ENCODE measurements at regions of chr19 and their contacts with region 1.

Region 1: GRCh38 chr19:45478454-45479238 is 10.8 kb downstream of the FOSB start:
- DNase-seq: peak; percentile 96
- ATAC-seq: peak; percentile 86
- H3K4me3 Mint-ChIP-seq: peak overlapping the region; percentile 58
- H3K27ac Mint-ChIP-seq: peak overlapping the region; percentile 95
- H3K4me1 Mint-ChIP-seq: peaks cover 18% of the 10 kb centered on the region
- H3K27me3 Mint-ChIP-seq: peaks cover 1% of the 10 kb centered on the region
- CTCF ChIP-seq: peak; percentile 71

Region 2: DNA sequence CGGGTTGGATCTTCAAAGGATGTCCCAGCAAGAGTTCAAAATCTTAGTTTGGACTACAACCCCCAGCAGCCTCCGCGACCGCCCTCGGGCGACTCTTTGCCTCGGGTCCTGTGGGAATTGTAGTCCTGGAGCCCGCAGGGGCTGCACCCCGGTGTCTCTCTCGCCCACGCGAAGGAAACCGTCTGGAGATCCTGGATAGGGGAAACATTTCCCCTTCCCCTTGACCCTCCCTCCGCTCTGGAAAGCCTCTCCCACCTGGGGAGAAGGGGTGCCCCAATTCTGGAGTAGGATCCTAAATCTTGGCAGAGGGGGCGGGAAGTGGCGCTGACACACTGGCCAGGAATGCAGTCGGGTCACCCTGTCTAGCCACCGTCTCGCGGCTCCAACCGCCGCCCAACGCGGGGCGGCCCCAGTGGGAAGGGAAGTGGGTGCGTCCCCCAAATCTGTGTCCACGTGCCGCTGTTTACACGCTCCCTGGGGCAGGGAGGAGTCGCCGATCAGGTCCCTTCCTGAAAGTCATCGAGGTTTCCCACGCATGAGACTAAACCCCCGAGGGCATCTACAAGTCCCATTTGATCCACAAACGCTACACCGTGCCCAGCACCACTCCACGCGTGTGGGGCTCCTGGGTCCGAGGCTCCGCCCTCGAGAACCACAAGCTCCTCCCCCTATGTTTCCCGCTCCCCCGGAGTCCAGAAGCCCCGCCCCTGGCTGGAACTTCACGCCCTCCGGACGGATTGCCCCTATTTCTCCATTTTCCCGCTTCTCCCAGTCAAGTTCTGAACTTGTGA is 73.0 kb before region 1 on chr19:
- CTCF ChIA-PET with region 1: interaction called, 32 read pairs
- POLR2A ChIA-PET with region 1: interaction called, 4 read pairs
- intact Hi-C with region 1: no loop called
- DNase-seq: peak; percentile 92
- ATAC-seq: peak; percentile 59
- H3K4me3 Mint-ChIP-seq: peak overlapping the region; percentile 93
- H3K27ac Mint-ChIP-seq: peak overlapping the region; percentile 88
- H3K4me1 Mint-ChIP-seq: peaks cover 36% of the 10 kb centered on the region
- H3K27me3 Mint-ChIP-seq: peaks cover 26% of the 10 kb centered on the region
- CTCF ChIP-seq: no peak

Region 3: GRCh38 chr19:45423589-45424190 is 55.0 kb before region 1 on chr19 and contains the start of gene ERCC1:
- CTCF ChIA-PET with region 1: interaction called, 22 read pairs
- POLR2A ChIA-PET with region 1: interaction called, 4 read pairs
- intact Hi-C with region 1: loop called (anchors 10 kb)
- DNase-seq: peak; percentile 89
- ATAC-seq: peak; percentile 74
- H3K4me3 Mint-ChIP-seq: peak within 1 kb of the TSS; percentile 89
- H3K27ac Mint-ChIP-seq: peak within 1 kb of the TSS; percentile 89
- H3K4me1 Mint-ChIP-seq: peaks cover 58% of the 10 kb centered on the region
- H3K27me3 Mint-ChIP-seq: no peaks in the 10 kb centered on the region
- CTCF ChIP-seq: no peak
- total RNA-seq, gene ERCC1: 41.6 to 46.5 TPM

Region 4: GRCh38 chr19:45450012-45450333 is 28.7 kb before region 1 on chr19:
- CTCF ChIA-PET with region 1: interaction called, 72 read pairs
- POLR2A ChIA-PET with region 1: interaction called, 11 read pairs
- intact Hi-C with region 1: no loop called
- DNase-seq: no peak
- ATAC-seq: peak; percentile 20
- H3K4me3 Mint-ChIP-seq: peak overlapping the region; percentile 77
- H3K27ac Mint-ChIP-seq: peak overlapping the region; percentile 91
- H3K4me1 Mint-ChIP-seq: peaks cover 34% of the 10 kb centered on the region
- H3K27me3 Mint-ChIP-seq: no peaks in the 10 kb centered on the region
- CTCF ChIP-seq: no peak

Region 5: GRCh38 chr19:45455707-45456499 is 22.7 kb before region 1 on chr19:
- CTCF ChIA-PET with region 1: interaction called, 10 read pairs
- POLR2A ChIA-PET with region 1: interaction called, 8 read pairs
- intact Hi-C with region 1: no loop called
- DNase-seq: peak; percentile 86
- ATAC-seq: peak; percentile 84
- H3K4me3 Mint-ChIP-seq: peak overlapping the region; percentile 37
- H3K27ac Mint-ChIP-seq: peak overlapping the region; percentile 78
- H3K4me1 Mint-ChIP-seq: peaks cover 28% of the 10 kb centered on the region
- H3K27me3 Mint-ChIP-seq: no peaks in the 10 kb centered on the region
- CTCF ChIP-seq: no peak

Region 6: GRCh38 chr19:45462174-45462573 is 16.5 kb before region 1 on chr19:
- CTCF ChIA-PET with region 1: interaction called, 63 read pairs
- POLR2A ChIA-PET with region 1: interaction called, 5 read pairs
- intact Hi-C with region 1: no loop called
- DNase-seq: no peak
- ATAC-seq: no peak
- H3K4me3 Mint-ChIP-seq: no peak overlapping the region
- H3K27ac Mint-ChIP-seq: no peak overlapping the region
- H3K4me1 Mint-ChIP-seq: peaks cover 3% of the 10 kb centered on the region
- H3K27me3 Mint-ChIP-seq: no peaks in the 10 kb centered on the region
- CTCF ChIP-seq: no peak

Region 7: DNA sequence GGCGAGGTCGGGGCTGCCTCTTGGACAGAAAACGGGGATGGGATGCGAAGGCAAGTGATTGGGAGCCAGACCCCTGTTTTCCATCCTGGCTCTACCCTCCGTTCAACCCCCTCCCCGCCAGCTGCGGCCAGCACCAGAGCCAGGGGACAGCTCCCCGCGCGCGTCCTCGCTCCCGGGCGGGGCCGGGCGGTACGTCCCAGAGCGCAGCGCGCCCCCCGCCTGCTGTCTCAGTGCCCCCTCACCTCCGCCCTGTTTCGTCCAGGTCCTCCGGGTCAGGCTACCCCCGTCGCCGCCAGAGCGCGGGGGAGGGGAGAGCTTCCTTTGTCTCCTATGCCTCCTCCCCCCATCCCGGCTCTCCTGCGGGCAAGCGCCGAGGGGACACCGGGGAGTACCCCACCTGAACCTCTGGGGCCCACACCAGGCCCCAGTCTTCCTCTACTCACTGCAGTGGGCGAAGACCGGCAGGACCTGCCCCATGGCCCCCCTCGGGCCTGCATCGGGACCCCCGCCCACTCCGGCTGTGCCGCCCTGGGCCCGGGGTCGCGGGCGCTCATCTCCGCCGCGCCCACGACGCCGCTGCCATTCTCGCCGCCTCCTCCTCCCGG is 17.8 kb after region 1 on chr19:
- CTCF ChIA-PET with region 1: interaction called, 28 read pairs
- POLR2A ChIA-PET with region 1: interaction called, 3 read pairs
- intact Hi-C with region 1: no loop called
- DNase-seq: peak; percentile 59
- ATAC-seq: peak; percentile 6
- H3K4me3 Mint-ChIP-seq: peak overlapping the region; percentile 28
- H3K27ac Mint-ChIP-seq: no peak overlapping the region
- H3K4me1 Mint-ChIP-seq: peaks cover 35% of the 10 kb centered on the region
- H3K27me3 Mint-ChIP-seq: peaks cover 19% of the 10 kb centered on the region
- CTCF ChIP-seq: no peak

Region 8: DNA sequence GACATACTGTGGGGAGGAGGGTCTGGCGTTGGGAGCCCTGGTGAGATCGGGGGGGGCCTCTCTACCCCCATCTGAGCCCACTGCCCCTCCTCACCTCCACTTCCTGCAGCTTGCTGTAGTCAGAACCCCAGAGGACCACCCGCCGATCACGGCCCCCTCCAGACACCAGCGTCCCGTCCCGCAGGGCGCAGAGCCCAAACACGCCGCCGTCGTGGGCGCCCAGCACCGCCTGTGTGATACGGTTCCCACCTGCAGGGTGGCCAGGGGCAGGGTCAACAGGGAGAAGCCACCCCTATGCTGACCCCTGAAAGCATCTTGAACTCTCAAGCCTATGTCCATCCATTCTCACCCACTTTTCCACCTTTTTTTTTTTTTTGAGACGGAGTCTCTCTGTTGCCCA is 142.7 kb after region 1 on chr19:
- CTCF ChIA-PET with region 1: no interaction called
- POLR2A ChIA-PET with region 1: no interaction called
- intact Hi-C with region 1: no loop called
- DNase-seq: no peak
- ATAC-seq: no peak
- H3K4me3 Mint-ChIP-seq: no peak overlapping the region
- H3K27ac Mint-ChIP-seq: no peak overlapping the region
- H3K4me1 Mint-ChIP-seq: peaks cover 10% of the 10 kb centered on the region
- H3K27me3 Mint-ChIP-seq: no peaks in the 10 kb centered on the region
- CTCF ChIP-seq: no peak

Measured in activated CD8-positive, alpha-beta T cell treated with anti-CD3 and anti-CD28 coated beads for 36 hours (primary cell).